ENCODE measurements at regions of chr6 and their contacts with region 1.

Region 1: GRCh38 chr6:127516666-127517273 is 2.4 kb downstream of the MTCL3 start:
- DNase-seq: peak; percentile 57
- ATAC-seq: peak; percentile 31
- H3K4me3 ChIP-seq: peak overlapping the region; percentile 74
- H3K27ac ChIP-seq: no peak overlapping the region
- H3K4me1 ChIP-seq: peaks cover 5% of the 10 kb centered on the region; the same call in 1 of the 2 replicates
- H3K27me3 ChIP-seq: 0 out of 2 replicates have a peak, but pooled peaks cover 3% of the 10 kb centered on the region
- CTCF ChIP-seq: peak; percentile 56
- POLR2A ChIP-seq: no peak
- RAD21 ChIP-seq: no peak

Region 2: GRCh38 chr6:127459231-127459641 is 57.5 kb before region 1 on chr6 and contains the start of gene KIAA0408:
- CTCF ChIA-PET with region 1: interaction called, 13 read pairs
- POLR2A ChIA-PET with region 1: no interaction called
- dilution Hi-C with region 1: no loop called
- in situ Hi-C with region 1: no loop called
- intact Hi-C with region 1: loop called (anchors 2 kb)
- DNase-seq: peak; percentile 87
- ATAC-seq: peak; percentile 88
- H3K4me3 ChIP-seq: peak within 1 kb of the TSS; percentile 5; the same call in 1 of the 2 replicates
- H3K27ac ChIP-seq: no peak within 1 kb of the TSS
- H3K4me1 ChIP-seq: peaks cover 6% of the 10 kb centered on the region
- H3K27me3 ChIP-seq: no peaks in the 10 kb centered on the region
- CTCF ChIP-seq: no peak
- POLR2A ChIP-seq: no peak
- RAD21 ChIP-seq: no peak
- total RNA-seq, gene KIAA0408: 0.83 and 0.90 TPM in 2 replicates

Region 3: GRCh38 chr6:127484212-127484858 is 32.4 kb before region 1 on chr6:
- CTCF ChIA-PET with region 1: interaction called, 14 read pairs
- POLR2A ChIA-PET with region 1: no interaction called
- dilution Hi-C with region 1: no loop called
- in situ Hi-C with region 1: no loop called
- intact Hi-C with region 1: loop called (anchors 5 kb)
- DNase-seq: peak; percentile 70
- ATAC-seq: peak; percentile 91
- H3K4me3 ChIP-seq: no peak overlapping the region
- H3K27ac ChIP-seq: no peak overlapping the region
- H3K4me1 ChIP-seq: peaks cover 4% of the 10 kb centered on the region
- H3K27me3 ChIP-seq: no peaks in the 10 kb centered on the region
- CTCF ChIP-seq: no peak
- POLR2A ChIP-seq: no peak
- RAD21 ChIP-seq: no peak

Region 4: DNA sequence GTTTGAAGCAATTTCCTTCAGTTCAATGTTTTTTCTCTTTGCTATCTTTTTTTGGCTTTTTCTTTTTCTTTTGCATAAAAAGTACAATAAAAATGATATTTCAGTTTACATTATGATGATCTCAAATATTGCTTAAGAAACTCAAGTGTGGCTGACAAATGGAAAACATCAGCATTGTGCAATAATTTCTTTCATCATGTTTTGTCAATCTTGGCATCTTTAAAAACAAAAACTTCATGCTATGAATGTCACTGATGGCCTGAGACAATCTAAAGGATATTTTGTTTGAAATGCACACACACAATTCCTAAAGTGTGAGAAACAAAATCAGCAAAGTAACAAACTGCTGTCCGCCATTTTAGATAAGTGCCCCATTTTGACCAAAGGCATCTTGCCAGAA is 16.2 kb after region 1 on chr6:
- CTCF ChIA-PET with region 1: interaction called, 12 read pairs
- POLR2A ChIA-PET with region 1: no interaction called
- dilution Hi-C with region 1: no loop called
- in situ Hi-C with region 1: no loop called
- intact Hi-C with region 1: no loop called
- DNase-seq: no peak
- ATAC-seq: no peak
- H3K4me3 ChIP-seq: no peak overlapping the region
- H3K27ac ChIP-seq: no peak overlapping the region
- H3K4me1 ChIP-seq: no peaks in the 10 kb centered on the region
- H3K27me3 ChIP-seq: peaks cover 2% of the 10 kb centered on the region; the same call in 1 of the 2 replicates
- CTCF ChIP-seq: no peak
- POLR2A ChIP-seq: no peak
- RAD21 ChIP-seq: no peak